Vagina (tissue), 2 donors: ENCODE measurements at regions of chr1 and their contacts with region 1.

Region 1: DNA sequence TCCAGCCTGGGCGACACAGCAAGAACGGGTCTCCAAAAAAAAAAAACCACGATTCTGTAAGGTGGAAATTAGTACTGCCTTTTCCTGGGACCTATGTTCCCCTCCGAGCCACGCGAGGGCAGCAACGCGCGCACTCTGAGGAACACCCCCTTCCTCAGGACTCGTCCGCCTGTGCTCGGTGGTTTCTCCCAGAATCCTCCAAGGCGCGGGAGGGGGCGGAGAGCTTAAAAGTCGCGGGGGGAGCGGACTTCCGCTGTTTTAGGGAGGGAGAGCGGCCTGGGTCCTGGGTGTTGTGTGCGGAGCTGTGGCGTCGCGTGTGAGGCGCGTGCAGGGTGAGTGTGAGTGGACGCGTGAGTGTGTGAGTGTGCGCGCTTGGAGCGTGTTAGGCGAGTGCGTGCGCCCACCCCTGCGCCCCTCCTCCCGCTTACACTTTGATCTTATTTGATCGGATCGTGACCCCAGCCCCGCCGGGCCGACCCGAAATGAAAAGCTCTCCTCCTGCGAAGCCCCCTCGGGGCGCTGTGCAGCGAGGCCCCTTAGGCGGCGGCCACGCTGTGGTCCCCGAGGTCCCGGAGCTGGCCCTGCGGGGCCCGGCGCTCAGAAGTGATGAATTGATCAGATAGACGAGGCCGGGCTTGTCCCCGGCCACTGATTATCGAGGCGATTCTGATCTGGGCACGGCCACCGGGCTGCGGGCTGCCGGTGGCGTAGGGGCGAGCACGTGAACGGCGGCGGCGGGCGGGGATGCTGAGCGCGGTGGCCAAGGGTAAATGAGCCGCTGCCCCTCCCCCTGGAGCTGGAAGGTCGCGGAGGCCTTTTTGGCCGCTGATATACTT is 9.6 kb downstream of the TMEM167B start:
- DNase-seq: peak in 1 of 2 donors; percentile 95
- H3K4me3 ChIP-seq: peak overlapping the region; percentile 87 to 89
- H3K27ac ChIP-seq: peak overlapping the region; percentile 92
- H3K4me1 ChIP-seq: peaks cover 28% of the 10 kb centered on the region
- H3K27me3 ChIP-seq: no peaks in the 10 kb centered on the region
- CTCF ChIP-seq: peak; percentile 73 to 89 (median 84)
- POLR2A ChIP-seq: peak in 1 of 2 donors; percentile 96

Region 2: GRCh38 chr1:109067883-109068282 is 32.3 kb before region 1 on chr1:
- intact Hi-C with region 1: no loop called
- DNase-seq: no peak
- H3K4me3 ChIP-seq: no peak overlapping the region
- H3K27ac ChIP-seq: no peak overlapping the region
- H3K4me1 ChIP-seq: no peaks in the 10 kb centered on the region
- H3K27me3 ChIP-seq: no peaks in the 10 kb centered on the region
- CTCF ChIP-seq: no peak
- POLR2A ChIP-seq: no peak

Region 3: GRCh38 chr1:109213785-109214468 is 113.8 kb after region 1 on chr1 and contains the start of gene SARS1:
- intact Hi-C with region 1: loop called (anchors 5 kb)
- DNase-seq: peak in 1 of 2 donors; percentile 94
- H3K4me3 ChIP-seq: peak within 1 kb of the TSS; percentile 78 to 91
- H3K27ac ChIP-seq: peak within 1 kb of the TSS; percentile 93
- H3K4me1 ChIP-seq: peaks cover 32% of the 10 kb centered on the region
- H3K27me3 ChIP-seq: no peaks in the 10 kb centered on the region
- CTCF ChIP-seq: no peak
- POLR2A ChIP-seq: peak in 1 of 2 donors; percentile 95
- total RNA-seq, gene SARS1: 135 TPM